ENCODE measurements at regions of chr3 and their contacts with region 1.

Region 1: DNA sequence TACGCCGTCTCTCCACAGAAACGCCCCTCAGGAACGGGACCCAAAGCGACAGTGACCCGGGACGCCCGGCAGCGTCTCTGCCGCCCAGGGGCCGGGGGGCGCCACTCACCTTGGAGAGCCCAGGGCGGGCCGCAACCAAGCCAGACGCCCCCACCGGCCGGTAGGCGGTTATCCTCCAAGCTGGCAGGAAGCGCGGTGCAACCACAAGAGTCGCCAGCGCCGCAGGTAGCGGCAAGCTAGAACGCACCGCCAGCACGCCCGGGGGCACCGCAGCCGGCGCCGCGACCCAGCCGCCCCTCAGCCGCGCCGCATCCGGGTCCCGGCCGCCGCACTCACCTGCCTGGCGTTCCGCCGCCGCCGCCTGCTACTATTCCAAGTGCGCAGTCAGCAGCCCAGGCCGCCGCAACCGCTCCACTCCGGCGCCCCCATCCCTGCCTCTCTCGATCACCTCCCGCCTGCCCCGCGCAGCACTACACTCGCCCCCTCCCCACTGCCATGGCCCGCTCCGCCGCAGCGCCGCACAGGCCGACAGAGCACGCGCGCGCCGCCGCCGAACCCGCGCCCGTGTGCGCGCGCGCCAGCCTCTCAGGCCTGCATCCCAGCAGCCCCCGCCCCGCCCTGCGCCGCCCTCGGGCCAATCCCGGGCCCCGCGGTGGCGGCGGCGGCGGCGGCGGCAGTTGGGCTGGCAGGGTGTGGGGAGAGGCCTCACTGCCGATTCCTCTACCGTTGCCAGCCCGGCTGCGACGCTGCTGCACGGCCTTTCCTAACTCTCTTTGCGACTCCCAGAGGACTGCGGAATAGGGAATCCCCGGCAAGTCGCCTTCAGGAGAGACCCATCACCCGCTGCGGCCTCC is at the start of gene PIK3CB:
- DNase-seq: peak; percentile 77
- H3K4me3 Mint-ChIP-seq: peak within 1 kb of the TSS; percentile 96
- H3K27ac Mint-ChIP-seq: peak within 1 kb of the TSS; percentile 94
- H3K4me1 Mint-ChIP-seq: peaks cover 16% of the 10 kb centered on the region
- H3K27me3 Mint-ChIP-seq: no peaks in the 10 kb centered on the region
- total RNA-seq, gene PIK3CB: 19.2 and 20.3 TPM in 2 replicates

Region 2: DNA sequence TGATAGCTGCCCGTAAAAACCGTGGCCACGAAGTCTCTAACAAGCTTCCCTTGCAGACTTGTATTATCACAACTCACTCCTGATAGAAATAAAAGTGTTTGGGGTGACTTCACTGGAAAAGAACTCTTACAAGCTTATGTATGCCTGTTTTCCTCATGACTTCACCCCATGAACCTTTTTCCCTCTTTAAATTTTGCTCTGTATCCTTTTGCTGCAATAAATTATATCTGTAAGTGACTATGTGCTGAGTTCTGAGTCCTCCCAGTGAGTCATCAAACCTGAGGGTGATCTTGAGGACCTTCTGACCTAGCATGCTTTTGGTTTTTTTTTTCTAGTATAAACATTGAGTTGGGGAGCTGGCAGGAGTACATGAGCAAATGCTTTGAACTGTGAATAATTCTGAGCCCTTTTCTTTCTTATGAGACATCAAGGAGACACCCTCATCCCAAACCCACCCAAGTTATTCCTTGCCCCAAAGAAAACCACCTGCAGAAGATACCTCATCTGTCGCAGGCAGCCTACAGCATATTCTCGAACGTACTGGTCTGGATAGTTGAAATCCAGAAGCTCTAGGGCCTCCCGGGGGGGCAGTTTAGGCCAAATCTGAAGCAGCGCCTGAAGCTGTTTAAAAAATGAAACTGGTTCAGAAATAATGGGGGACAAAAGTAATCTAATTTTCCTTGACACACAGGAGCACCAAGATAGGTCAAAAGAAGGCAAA is 140.1 kb before region 1 on chr3:
- intact Hi-C with region 1: loop called (anchors 10 kb)
- DNase-seq: no peak
- H3K4me3 Mint-ChIP-seq: no peak overlapping the region
- H3K27ac Mint-ChIP-seq: no peak overlapping the region
- H3K4me1 Mint-ChIP-seq: no peaks in the 10 kb centered on the region
- H3K27me3 Mint-ChIP-seq: no peaks in the 10 kb centered on the region

Region 3: DNA sequence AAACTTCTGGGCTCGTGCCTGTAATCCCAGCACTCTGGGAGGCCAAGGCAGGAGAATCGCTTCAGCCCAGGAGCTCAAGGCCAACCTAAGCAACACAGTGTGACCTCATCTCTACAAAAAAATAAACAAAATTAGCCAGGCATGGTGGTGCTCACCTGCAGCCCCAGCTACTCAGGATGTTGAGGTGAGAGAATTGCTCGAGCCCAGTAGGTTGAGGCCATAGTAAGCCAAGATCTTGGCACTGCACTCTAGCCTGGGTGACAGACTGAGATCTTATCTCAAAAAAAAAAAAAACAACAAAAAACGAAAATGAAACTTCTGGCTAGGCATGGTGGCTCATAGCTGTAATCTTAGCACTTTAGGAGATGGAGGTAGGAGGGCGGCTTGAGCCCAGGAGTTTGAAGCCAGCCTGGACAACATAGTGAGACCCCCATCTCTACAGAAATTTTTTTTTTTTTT is 53.5 kb before region 1 on chr3:
- intact Hi-C with region 1: loop called (anchors 1 kb)
- DNase-seq: peak; percentile 65
- H3K4me3 Mint-ChIP-seq: no peak overlapping the region
- H3K27ac Mint-ChIP-seq: peak overlapping the region; percentile 42
- H3K4me1 Mint-ChIP-seq: peaks cover 17% of the 10 kb centered on the region
- H3K27me3 Mint-ChIP-seq: no peaks in the 10 kb centered on the region

Region 4: DNA sequence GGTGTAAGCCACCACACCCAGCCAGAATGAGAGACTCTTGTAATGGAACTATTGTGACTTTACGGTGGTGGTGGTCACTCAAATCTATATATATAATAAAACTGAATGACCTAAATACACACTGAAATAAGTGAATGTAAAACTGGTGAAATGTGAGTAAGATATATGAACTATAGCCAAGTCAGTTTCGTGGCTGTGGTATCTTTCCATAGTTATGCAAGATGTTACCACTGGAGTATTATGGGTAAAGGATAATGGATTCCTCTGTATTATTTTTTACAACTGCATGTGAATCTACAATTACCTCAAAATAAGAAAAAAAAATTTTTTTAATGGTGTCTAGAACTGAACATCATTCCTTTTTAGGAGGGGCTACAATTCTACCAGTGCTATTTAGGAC is 21.8 kb before region 1 on chr3:
- intact Hi-C with region 1: no loop called
- DNase-seq: no peak
- H3K4me3 Mint-ChIP-seq: no peak overlapping the region
- H3K27ac Mint-ChIP-seq: no peak overlapping the region
- H3K4me1 Mint-ChIP-seq: peaks cover 15% of the 10 kb centered on the region
- H3K27me3 Mint-ChIP-seq: no peaks in the 10 kb centered on the region

Region 5: GRCh38 chr3:138974462-138974861 is 139.9 kb after region 1 on chr3:
- intact Hi-C with region 1: no loop called
- DNase-seq: no peak
- H3K4me3 Mint-ChIP-seq: no peak overlapping the region
- H3K27ac Mint-ChIP-seq: no peak overlapping the region
- H3K4me1 Mint-ChIP-seq: no peaks in the 10 kb centered on the region
- H3K27me3 Mint-ChIP-seq: peaks cover 6% of the 10 kb centered on the region

Region 6: GRCh38 chr3:139343895-139344856 is 509.6 kb after region 1 on chr3 and contains the start of gene MRPS22:
- intact Hi-C with region 1: loop called (anchors 10 kb)
- DNase-seq: peak; percentile 78
- H3K4me3 Mint-ChIP-seq: no peak within 1 kb of the TSS
- H3K27ac Mint-ChIP-seq: peak within 1 kb of the TSS; percentile 6
- H3K4me1 Mint-ChIP-seq: peaks cover 15% of the 10 kb centered on the region
- H3K27me3 Mint-ChIP-seq: no peaks in the 10 kb centered on the region
- total RNA-seq, gene MRPS22: 51.2 and 51.9 TPM in 2 replicates

Measured in activated T-helper 2 cell treated with anti-CD3 and anti-CD28 coated beads, Interferon-gamma antibody, Interleukin-2, Interleukin-4, amounts not matched to agents 10 μg/mL and 5 μg/mL and 100 μg/mL, durations not matched to agents 14 hours and 24 hours and 36 hours (primary cell).